Gastrocnemius medialis (tissue), 4 donors: ENCODE measurements at regions of chr7 and their contacts with region 1.

Region 1: GRCh38 chr7:112286250-112287086 is 80.0 kb downstream of the ZNF277 start:
- DNase-seq: no peak
- ATAC-seq: no peak
- H3K4me3 ChIP-seq: no peak overlapping the region
- H3K27ac ChIP-seq: no peak overlapping the region
- H3K4me1 ChIP-seq: no peaks in the 10 kb centered on the region
- H3K27me3 ChIP-seq: no peaks in the 10 kb centered on the region
- CTCF ChIP-seq: no peak
- POLR2A ChIP-seq: no peak

Region 2: GRCh38 chr7:112510001-112510742 is 223.7 kb after region 1 on chr7:
- in situ Hi-C with region 1: loop called in 1 of 4 experiments (anchors 25 kb)
- intact Hi-C with region 1: no loop called
- DNase-seq: no peak
- ATAC-seq: peak in 1 of 2 donors; percentile 27
- H3K4me3 ChIP-seq: no peak overlapping the region
- H3K27ac ChIP-seq: no peak overlapping the region
- H3K4me1 ChIP-seq: no peaks in the 10 kb centered on the region
- H3K27me3 ChIP-seq: no peaks in the 10 kb centered on the region
- CTCF ChIP-seq: no peak
- POLR2A ChIP-seq: no peak